GM10248 (cell line): ENCODE measurements at regions of chr6 and their contacts with region 1.

Region 1: GRCh38 chr6:26216356-26216885 is 129.2 kb downstream of the HFE start:
- DNase-seq: peak; percentile 85
- CTCF ChIP-seq: no peak

Region 2: DNA sequence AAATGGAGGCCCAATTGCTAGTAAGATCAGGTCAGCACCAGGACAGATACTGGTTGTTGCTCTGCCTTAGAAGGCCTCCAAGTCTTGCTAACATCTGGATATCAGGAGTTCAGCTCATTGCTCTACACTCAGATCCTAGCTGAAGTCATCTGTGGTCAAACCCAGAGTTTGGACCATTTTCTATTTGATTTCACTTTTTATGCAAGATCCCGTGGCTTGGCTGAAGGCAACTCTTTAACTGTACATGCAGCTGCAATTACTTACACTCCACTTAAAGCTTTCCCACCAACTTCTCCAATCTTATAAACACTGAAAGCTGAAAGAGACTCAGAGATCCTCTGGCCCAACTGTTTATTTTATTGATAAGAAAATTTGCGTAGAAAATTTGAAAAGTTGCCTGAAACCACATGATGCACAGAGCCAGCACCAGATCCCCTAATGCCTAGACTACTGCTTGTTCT is 288.6 kb before region 1 on chr6:
- CTCF ChIA-PET with region 1: no interaction called
- POLR2A ChIA-PET with region 1: no interaction called
- DNase-seq: no peak
- CTCF ChIP-seq: no peak

Region 3: DNA sequence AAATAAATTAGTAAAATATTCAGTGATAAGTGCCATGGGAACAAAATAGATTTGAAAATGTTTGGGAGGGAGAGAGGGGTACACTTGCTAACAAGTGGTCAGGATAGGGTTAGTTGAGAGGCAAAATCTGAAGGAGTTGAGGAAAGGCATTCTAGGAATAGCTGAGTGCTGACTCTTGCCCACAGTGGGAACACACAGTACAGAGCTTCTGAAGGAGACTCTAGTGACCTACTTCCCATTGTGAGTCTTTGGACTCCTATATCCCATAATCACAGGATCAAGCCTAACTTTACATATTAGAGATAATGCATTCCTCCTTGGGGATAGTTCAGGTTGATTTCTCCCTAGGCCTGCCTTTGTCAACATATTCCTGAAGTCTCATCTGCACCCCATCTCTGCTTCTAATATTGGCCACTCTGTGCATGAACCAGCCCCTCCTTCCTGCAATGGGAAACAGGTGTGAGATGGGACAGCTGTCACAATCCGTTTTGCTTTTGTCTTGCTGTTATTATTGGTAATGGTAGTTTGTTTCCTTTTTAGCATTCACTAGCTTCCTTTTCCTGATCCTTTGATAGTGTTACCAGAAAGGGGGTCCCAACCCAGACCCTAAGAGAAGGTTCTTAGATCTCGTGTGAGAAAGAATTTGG is 256.4 kb before region 1 on chr6:
- CTCF ChIA-PET with region 1: no interaction called
- POLR2A ChIA-PET with region 1: no interaction called
- DNase-seq: no peak
- CTCF ChIP-seq: no peak

Region 4: DNA sequence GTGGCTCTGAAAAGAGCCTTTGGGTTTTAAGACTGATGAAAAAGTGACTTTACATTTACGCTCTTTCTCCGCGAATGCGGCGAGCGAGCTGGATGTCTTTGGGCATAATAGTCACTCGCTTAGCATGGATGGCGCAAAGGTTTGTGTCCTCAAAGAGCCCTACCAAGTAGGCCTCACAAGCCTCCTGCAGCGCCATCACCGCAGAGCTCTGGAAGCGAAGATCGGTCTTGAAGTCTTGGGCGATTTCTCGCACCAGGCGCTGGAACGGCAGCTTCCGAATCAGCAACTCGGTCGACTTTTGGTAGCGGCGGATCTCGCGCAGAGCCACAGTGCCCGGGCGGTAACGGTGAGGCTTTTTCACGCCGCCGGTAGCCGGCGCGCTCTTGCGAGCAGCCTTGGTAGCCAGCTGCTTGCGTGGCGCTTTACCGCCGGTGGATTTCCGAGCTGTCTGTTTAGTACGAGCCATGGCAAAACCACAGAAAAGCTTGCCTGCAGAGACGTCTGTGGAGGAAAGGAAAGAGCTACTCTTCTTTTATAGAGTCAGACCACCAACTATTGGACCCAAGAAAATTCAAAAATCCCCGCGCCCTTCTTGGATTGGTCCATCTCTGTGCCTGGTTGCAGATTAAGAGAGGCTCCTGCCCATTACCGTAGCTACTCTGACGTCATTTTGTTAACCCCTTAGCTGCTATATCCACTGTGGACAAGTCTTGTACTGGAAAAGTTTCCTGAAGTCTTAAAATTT is 184.7 kb before region 1 on chr6:
- CTCF ChIA-PET with region 1: interaction called, 4 read pairs
- POLR2A ChIA-PET with region 1: interaction called, 21 read pairs
- DNase-seq: peak; percentile 89
- CTCF ChIP-seq: peak; percentile 9

Region 5: DNA sequence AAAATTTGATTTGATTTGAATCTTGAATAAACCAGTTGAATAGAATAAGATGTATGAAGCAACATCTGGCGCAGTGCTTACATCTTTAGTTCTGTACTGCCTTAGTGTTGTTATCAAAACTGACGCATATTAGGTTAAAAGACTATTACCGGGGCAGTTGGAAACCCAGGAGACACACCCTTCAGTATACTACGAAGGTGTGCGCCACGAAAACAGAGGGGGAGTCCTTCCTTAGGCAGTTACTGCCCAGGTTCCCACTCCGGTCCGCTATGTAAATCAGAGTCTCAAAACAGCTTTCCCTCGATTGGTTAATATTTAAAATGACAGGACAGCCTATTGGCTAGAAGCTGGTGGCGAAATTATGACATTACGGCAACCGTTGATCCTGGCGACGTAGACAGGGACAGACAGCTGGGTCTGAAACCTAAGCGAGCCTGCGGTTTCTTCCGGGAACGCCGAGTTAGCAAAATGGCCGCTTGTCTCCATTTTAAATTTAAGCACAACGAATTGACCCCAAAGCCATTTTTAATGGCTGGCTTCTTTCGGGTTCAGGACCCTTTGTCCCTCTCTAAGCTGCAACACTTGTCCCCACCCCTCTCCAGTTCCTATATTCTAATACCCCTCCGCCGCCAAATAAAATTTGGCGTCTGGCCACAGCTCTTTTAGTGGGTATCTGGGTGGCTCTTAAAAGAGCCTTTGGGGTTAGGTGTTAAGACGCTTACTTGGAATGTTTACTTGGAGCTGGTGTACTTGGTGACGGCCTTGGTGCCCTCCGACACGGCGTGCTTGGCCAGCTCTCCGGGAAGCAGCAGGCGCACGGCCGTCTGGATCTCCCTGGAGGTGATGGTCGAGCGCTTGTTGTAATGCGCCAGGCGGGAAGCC is 93.4 kb before region 1 on chr6:
- CTCF ChIA-PET with region 1: no interaction called
- POLR2A ChIA-PET with region 1: interaction called, 72 read pairs
- DNase-seq: peak; percentile 83
- CTCF ChIP-seq: no peak

Region 6: GRCh38 chr6:26183581-26184366 is 32.6 kb before region 1 on chr6:
- CTCF ChIA-PET with region 1: interaction called, 4 read pairs
- POLR2A ChIA-PET with region 1: interaction called, 33 read pairs
- DNase-seq: peak; percentile 52
- CTCF ChIP-seq: no peak

Region 7: DNA sequence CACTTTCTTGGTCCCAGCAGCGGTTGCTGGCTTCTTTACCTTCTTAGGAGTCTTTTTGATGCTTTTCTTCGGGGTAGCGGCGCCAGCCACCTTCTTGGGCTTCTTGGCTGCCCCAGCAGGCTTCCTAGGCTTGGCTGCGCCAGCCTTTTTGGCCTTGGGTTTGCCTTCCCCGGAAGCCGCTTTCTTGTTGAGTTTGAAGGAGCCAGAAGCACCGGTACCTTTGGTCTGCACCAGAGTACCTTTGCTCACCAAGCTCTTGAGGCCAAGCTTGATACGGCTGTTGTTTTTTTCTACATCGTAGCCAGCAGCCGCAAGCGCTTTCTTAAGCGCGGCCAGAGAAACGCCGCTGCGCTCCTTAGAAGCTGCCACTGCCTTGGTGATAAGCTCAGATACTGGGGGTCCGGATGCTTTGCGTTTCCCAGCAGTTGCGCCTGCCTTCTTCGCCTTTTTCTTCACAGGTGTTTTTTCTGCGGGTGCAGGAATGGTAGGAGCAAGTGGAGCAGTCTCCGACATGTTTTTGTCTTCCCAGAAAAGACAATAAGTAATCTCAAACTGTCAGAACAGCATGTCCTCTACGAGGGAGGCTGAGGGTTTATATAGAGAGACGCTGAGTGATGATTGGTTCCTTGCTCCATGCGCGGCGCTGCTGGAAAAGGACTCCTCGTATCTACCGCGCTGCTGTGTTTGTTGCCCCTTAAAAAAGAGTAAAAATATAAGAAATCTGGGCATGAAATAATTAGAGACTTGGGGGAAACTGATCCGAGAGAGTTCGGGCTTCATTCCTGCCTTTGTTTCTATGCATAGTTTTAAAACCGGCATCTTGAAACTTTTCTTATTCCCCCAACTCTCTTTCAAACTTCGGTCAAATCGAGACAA is 18.2 kb after region 1 on chr6:
- CTCF ChIA-PET with region 1: interaction called, 12 read pairs
- POLR2A ChIA-PET with region 1: interaction called, 105 read pairs
- DNase-seq: peak; percentile 73
- CTCF ChIP-seq: no peak

Region 8: GRCh38 chr6:26401987-26402658 is 185.7 kb after region 1 on chr6 and contains the start of gene BTN3A1:
- CTCF ChIA-PET with region 1: no interaction called
- POLR2A ChIA-PET with region 1: no interaction called
- DNase-seq: peak; percentile 60
- CTCF ChIP-seq: no peak

Region 9: GRCh38 chr6:27132532-27133280 is 916.3 kb after region 1 on chr6:
- CTCF ChIA-PET with region 1: no interaction called
- POLR2A ChIA-PET with region 1: interaction called, 12 read pairs
- DNase-seq: peak; percentile 95
- CTCF ChIP-seq: no peak